CD8-positive, alpha-beta memory T cell (primary cell): ENCODE measurements at regions of chr1 and their contacts with region 1.

Region 1: DNA sequence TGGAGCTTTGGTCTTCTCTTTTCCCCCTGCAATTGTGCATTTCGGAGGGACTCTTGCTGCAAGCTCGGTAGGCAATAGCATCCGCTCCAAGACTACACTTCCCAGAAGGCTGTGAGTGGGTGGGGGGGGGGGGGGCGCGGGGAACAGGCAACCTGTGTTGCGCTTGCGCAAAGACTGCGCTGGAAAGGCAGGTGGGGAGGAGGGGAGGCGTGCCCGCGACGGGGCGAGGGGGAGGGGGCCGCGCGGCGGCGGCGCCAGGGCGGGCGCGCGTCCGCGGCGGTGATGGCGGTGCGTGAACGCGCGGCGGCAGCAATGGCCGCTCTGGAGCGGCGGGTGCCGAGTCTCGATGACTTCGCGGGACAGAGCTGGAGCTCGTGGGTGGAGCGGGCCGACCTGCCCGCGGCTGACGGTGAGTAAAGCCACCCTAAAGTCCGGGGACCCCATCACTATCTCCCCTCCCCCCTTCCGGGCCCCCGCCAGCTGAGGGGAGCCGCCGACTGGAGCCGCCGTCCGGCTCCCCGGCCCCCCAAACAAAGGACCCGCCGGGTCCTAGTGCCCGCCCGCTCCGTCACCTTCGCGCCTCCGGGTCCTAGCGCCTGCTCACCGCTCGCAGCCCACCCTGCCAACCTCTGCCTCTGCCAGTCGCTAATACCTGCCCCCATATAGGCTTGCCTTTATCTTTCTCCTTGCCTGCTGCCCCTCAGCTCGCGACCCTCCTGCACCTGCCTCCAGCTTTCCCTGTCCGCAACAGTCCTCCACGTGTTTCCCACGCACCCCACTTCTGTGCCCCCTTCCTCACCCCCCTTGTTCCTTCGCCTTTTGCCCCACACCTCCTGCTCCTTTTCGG is at the start of gene ATXN7L2:
- DNase-seq: peak; percentile 88 to 97 (median 92)
- H3K4me3 ChIP-seq: peak within 1 kb of the TSS; percentile 96
- H3K4me3 Mint-ChIP-seq: peak within 1 kb of the TSS; percentile 85 to 99 (median 94)
- H3K27ac ChIP-seq: peak within 1 kb of the TSS; percentile 79
- H3K27ac Mint-ChIP-seq: peak within 1 kb of the TSS; percentile 73 to 98 (median 94)
- H3K4me1 ChIP-seq: peaks cover 23% of the 10 kb centered on the region
- H3K4me1 Mint-ChIP-seq: peaks cover 19 to 39% (median 33%) of the 10 kb centered on the region in 3 donors
- H3K27me3 ChIP-seq: no peaks in the 10 kb centered on the region
- H3K27me3 Mint-ChIP-seq: peaks cover 3 to 7% of the 10 kb centered on the region in 2 donors
- total RNA-seq, gene ATXN7L2: 14.6 to 15.3 TPM

Region 2: GRCh38 chr1:109397538-109398342 is 86.2 kb before region 1 on chr1 and contains the start of gene SORT1:
- CTCF ChIA-PET with region 1: no interaction called
- POLR2A ChIA-PET with region 1: interaction called, 11 read pairs
- DNase-seq: peak; percentile 38 to 78 (median 50)
- H3K4me3 ChIP-seq: peak within 1 kb of the TSS; percentile 30
- H3K4me3 Mint-ChIP-seq: peak within 1 kb of the TSS; percentile 77 to 92 (median 80)
- H3K27ac ChIP-seq: peak within 1 kb of the TSS; percentile 60
- H3K27ac Mint-ChIP-seq: peak within 1 kb of the TSS in 3 of 8 donors; percentile 41 to 67 (median 46)
- H3K4me1 ChIP-seq: peaks cover 10% of the 10 kb centered on the region
- H3K4me1 Mint-ChIP-seq: peaks cover 7 to 18% (median 15%) of the 10 kb centered on the region in 3 donors
- H3K27me3 ChIP-seq: peaks cover 24% of the 10 kb centered on the region
- H3K27me3 Mint-ChIP-seq: peaks cover 33 to 41% of the 10 kb centered on the region in 2 donors
- total RNA-seq, gene SORT1: 3.0 to 3.9 TPM

Region 3: GRCh38 chr1:109426278-109427170 is 57.4 kb before region 1 on chr1 and contains the start of gene PSMA5:
- CTCF ChIA-PET with region 1: interaction called, 12 read pairs
- POLR2A ChIA-PET with region 1: interaction called, 16 read pairs
- DNase-seq: peak; percentile 89 to 98 (median 94)
- H3K4me3 ChIP-seq: peak within 1 kb of the TSS; percentile 85
- H3K4me3 Mint-ChIP-seq: peak within 1 kb of the TSS; percentile 96 to 99 (median 98)
- H3K27ac ChIP-seq: peak within 1 kb of the TSS; percentile 94
- H3K27ac Mint-ChIP-seq: peak within 1 kb of the TSS; percentile 96 to 100 (median 99)
- H3K4me1 ChIP-seq: peaks cover 45% of the 10 kb centered on the region
- H3K4me1 Mint-ChIP-seq: peaks cover 35 to 47% (median 47%) of the 10 kb centered on the region in 3 donors
- H3K27me3 ChIP-seq: no peaks in the 10 kb centered on the region
- H3K27me3 Mint-ChIP-seq: no peaks in the 10 kb centered on the region
- total RNA-seq, gene PSMA5: 207 to 238 TPM

Region 4: GRCh38 chr1:109493805-109494539 is 10.1 kb after region 1 on chr1 and contains the start of gene CYB561D1:
- CTCF ChIA-PET with region 1: interaction called, 384 read pairs
- POLR2A ChIA-PET with region 1: interaction called, 5 read pairs
- DNase-seq: peak; percentile 85 to 92 (median 88)
- H3K4me3 ChIP-seq: peak within 1 kb of the TSS; percentile 87
- H3K4me3 Mint-ChIP-seq: peak within 1 kb of the TSS; percentile 92 to 98 (median 95)
- H3K27ac ChIP-seq: peak within 1 kb of the TSS; percentile 51
- H3K27ac Mint-ChIP-seq: peak within 1 kb of the TSS; percentile 80 to 97 (median 90)
- H3K4me1 ChIP-seq: peaks cover 54% of the 10 kb centered on the region
- H3K4me1 Mint-ChIP-seq: peaks cover 41 to 61% (median 52%) of the 10 kb centered on the region in 3 donors
- H3K27me3 ChIP-seq: no peaks in the 10 kb centered on the region
- H3K27me3 Mint-ChIP-seq: no peaks in the 10 kb centered on the region
- total RNA-seq, gene CYB561D1: 9.9 to 10.6 TPM

Region 5: DNA sequence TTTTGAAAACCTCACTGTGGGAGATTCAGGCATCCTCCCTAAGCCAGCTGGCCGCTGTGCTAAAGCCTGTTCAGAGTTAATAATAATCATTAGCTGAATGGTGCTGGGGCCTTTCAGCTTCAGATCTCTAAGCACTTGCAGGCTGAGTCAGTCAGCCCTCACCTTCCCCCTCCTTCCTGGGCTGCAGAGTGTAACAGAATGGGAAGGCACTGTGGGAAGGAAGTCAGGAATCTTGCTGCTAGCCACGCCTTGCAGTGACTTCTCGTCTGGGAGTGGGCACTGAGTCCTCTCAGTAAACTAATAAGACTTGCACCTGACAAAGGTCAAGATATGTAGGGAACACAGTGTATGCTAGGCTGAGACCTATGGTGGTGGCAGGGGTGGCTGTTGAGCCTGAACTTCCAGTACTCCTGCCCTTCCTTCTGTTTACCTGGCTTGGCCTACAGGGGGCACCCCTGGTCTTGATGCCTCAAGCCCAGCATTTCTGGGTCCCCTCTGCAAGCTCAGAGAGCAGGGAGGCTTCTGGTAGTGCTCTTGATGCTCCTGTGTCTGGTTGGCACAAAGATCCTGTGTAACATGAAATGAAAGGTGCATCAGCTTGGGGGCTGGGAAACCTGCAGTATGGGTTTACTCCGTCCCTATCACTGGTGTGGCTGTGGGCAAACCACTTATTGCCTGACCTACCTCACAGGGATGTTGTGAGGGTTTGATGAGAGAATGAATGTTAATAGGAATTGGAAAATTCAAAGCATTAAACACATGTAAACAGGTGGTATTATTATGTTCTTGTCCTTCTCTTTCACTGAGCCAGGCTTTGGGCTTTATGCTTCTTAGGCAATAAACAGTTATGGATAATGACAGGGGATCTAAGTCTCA is 16.0 kb after region 1 on chr1:
- CTCF ChIA-PET with region 1: interaction called, 384 read pairs
- POLR2A ChIA-PET with region 1: interaction called, 4 read pairs
- DNase-seq: peak; percentile 31 to 77 (median 56)
- H3K4me3 ChIP-seq: peak overlapping the region; percentile 5
- H3K4me3 Mint-ChIP-seq: peak overlapping the region; percentile 41 to 87 (median 63)
- H3K27ac ChIP-seq: no peak overlapping the region
- H3K27ac Mint-ChIP-seq: peak overlapping the region; percentile 85 to 97 (median 94)
- H3K4me1 ChIP-seq: peaks cover 96% of the 10 kb centered on the region
- H3K4me1 Mint-ChIP-seq: peaks cover 84 to 98% (median 94%) of the 10 kb centered on the region in 3 donors
- H3K27me3 ChIP-seq: no peaks in the 10 kb centered on the region
- H3K27me3 Mint-ChIP-seq: no peaks in the 10 kb centered on the region